ENCODE measurements at regions of chr13 and their contacts with region 1.

Region 1: DNA sequence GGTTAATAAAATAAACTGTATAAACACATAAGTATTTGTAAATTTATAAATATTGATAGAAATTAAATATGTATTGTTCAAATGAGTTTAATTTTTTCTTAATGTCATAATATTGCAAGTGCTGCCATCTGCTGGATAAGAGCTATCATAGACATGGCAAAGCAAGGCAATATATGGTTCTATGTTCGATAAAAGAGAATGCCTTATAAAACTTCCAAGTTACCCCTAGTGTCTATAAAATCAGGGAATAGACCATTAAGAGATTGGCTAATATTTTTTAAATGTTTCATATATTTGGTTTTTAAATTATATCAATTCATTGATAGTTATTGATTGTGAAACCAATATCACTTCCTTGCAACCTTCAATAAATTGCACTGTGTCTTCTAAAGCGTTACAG is 28.9 kb upstream of the SLITRK6 start:
- DNase-seq: peak; percentile 6
- H3K4me3 ChIP-seq: no peak overlapping the region; a peak in 1 of 4 replicates
- H3K27ac ChIP-seq: no peak overlapping the region; a peak in 1 of 4 replicates
- H3K4me1 ChIP-seq: no peaks in the 10 kb centered on the region; a peak in 1 of 4 replicates
- H3K27me3 ChIP-seq: 0 out of 2 replicates have a peak, but pooled peaks cover 5% of the 10 kb centered on the region
- CTCF ChIP-seq: peak; percentile 76
- EP300 ChIP-seq: no peak
- RAD21 ChIP-seq: peak; percentile 62

Region 2: DNA sequence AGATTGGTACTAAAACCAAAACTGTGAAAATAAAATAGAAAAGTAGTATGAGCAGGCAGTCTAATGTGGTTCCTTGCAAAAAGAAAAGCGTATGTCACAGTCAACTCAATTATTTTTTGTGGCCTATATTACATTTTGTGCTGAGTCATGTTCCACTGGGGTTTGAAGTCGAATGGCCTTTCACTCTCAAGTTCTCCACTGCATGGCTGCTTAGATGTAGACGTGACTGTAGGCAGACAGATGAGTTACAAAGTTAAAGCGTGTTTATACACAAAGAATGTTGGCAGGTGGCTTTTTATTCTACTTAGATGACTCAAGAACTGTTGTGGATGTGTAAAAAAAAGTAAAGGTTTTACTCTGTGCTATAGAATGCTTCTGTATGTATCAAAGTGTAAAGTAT is 162.9 kb before region 1 on chr13:
- CTCF ChIA-PET with region 1: no interaction called
- POLR2A ChIA-PET with region 1: no interaction called
- DNase-seq: no peak
- H3K4me3 ChIP-seq: no peak overlapping the region
- H3K27ac ChIP-seq: no peak overlapping the region; a peak in 1 of 4 replicates
- H3K4me1 ChIP-seq: peaks cover 4 to 12% of the 10 kb centered on the region in 2 experiments; a peak in 3 of 4 replicates
- H3K27me3 ChIP-seq: no peaks in the 10 kb centered on the region
- CTCF ChIP-seq: no peak
- EP300 ChIP-seq: no peak
- RAD21 ChIP-seq: no peak

Region 3: GRCh38 chr13:85816413-85816812 is 11.7 kb before region 1 on chr13:
- CTCF ChIA-PET with region 1: interaction called, 14 read pairs
- POLR2A ChIA-PET with region 1: no interaction called
- DNase-seq: no peak
- H3K4me3 ChIP-seq: no peak overlapping the region
- H3K27ac ChIP-seq: no peak overlapping the region; a peak in 1 of 4 replicates
- H3K4me1 ChIP-seq: peaks cover 0 to 3% of the 10 kb centered on the region in 2 experiments; a peak in 2 of 4 replicates
- H3K27me3 ChIP-seq: no peaks in the 10 kb centered on the region
- CTCF ChIP-seq: peak; percentile 64
- EP300 ChIP-seq: no peak
- RAD21 ChIP-seq: peak; percentile 67

Measured in SK-N-SH (cell line).